HEK293T (cell line): ENCODE measurements at regions of chr4 and their contacts with region 1.

Region 1: GRCh38 chr4:121252224-121252806 is 88.2 kb upstream of the TNIP3 start:
- DNase-seq: peak; percentile 73

Region 2: DNA sequence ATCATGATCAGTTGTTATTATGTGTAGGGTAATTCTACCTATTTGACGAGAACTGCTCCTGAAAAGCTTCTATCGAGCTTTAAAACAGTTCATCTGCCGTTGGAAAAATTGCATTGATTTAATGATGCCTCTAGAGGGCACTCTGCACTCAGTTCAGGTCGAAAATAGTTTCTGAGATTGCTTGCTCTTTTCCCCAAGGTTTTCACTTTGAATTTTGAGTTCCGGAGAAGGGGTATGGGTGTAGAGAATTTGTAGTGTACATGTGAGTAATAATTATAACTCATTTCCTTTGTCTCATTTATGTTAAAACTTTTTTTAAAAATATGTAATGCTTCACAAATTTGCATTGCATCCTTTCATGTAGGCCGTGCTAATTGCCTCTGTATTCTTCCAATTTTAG is 59.8 kb before region 1 on chr4:
- CTCF ChIA-PET with region 1: interaction called, 12 read pairs
- POLR2A ChIA-PET with region 1: no interaction called
- DNase-seq: peak; percentile 40